Heart right ventricle (tissue), 16 donors: ENCODE measurements at regions of chr1 and their contacts with region 1.

Region 1: GRCh38 chr1:28172713-28173150 is 3.8 kb downstream of the PTAFR start:
- DNase-seq: no peak
- ATAC-seq: peak; percentile 34 to 61 (median 52)
- H3K4me3 ChIP-seq: peak overlapping the region in 2 of 10 donors; percentile 3 to 54
- H3K27ac ChIP-seq: peak overlapping the region in 4 of 10 donors; percentile 9 to 90 (median 34)
- H3K4me1 ChIP-seq: peaks cover 0 to 75% (median 17%) of the 10 kb centered on the region in 9 donors
- H3K27me3 ChIP-seq: no peaks in the 10 kb centered on the region
- CTCF ChIP-seq: no peak

Region 2: GRCh38 chr1:28112388-28113241 is 60.1 kb before region 1 on chr1:
- intact Hi-C with region 1: loop called in 1 of 10 experiments (anchors 10 kb)
- DNase-seq: peak in 1 of 2 donors; percentile 8
- ATAC-seq: peak in 4 of 8 donors; percentile 31 to 72 (median 50)
- H3K4me3 ChIP-seq: no peak overlapping the region
- H3K27ac ChIP-seq: peak overlapping the region in 2 of 10 donors; percentile 5 to 87
- H3K4me1 ChIP-seq: peaks cover 0 to 68% (median 0%) of the 10 kb centered on the region in 9 donors
- H3K27me3 ChIP-seq: no peaks in the 10 kb centered on the region
- CTCF ChIP-seq: peak in 1 of 9 donors; percentile 23

Region 3: DNA sequence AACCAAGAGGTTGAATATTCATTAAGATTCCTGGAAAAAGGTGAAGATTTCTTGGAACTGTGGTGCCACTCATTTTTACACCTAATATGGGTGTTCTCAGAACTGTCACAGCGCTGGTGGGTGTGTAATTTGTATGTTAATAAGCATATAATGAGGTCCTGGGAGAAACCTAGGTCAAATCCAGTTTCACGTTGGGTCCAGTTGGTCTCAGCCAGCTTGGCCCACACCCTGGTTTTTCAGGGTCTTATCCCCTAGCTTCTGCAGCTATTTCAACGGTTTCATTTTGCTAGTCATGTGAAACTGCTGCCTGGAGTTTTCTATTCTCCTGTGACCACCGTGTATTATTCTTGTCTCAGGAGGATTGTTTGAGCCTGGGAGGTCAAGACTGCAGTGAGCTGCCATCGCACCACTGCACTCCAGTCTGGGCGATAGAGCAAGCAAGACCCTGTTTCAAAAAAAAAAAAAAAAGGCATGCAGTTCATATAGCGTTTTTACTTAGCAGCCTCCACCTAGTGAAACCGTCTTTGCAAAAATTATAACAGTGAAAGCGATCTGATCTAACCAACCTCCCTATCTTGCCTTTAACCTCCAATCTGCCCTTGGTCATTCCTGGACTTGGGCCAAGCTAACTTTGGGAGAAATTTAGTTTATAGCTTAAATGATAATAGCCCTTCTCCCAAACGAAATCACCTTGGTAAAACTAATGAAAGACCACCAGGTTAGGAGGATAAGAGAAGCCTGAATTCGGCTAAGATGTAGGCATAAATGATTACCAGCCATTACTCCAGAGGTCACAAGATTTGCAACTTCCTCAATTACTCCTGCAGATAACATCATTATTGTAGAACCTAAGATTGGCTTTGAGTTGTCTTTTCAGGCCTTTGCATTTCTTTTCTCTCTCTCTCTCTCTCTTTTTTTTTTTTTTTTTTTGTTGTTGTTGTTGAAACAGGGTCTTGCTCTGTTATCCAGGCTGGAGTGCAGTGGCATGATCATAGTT is 40.3 kb before region 1 on chr1:
- intact Hi-C with region 1: loop called in 1 of 10 experiments (anchors 5 kb)
- DNase-seq: no peak
- ATAC-seq: no peak
- H3K4me3 ChIP-seq: no peak overlapping the region
- H3K27ac ChIP-seq: peak overlapping the region in 1 of 10 donors; percentile 13
- H3K4me1 ChIP-seq: peaks cover 0 to 64% (median 0%) of the 10 kb centered on the region in 9 donors
- H3K27me3 ChIP-seq: no peaks in the 10 kb centered on the region
- CTCF ChIP-seq: no peak